IMR-90 (cell line): ENCODE measurements at regions of chr5 and their contacts with region 1.

Region 1: GRCh38 chr5:179795863-179796833 is 2.4 kb downstream of the LTC4S start:
- DNase-seq: peak; percentile 78
- ATAC-seq: peak; percentile 88
- H3K4me3 ChIP-seq: peak overlapping the region; percentile 59
- H3K27ac ChIP-seq: peak overlapping the region; percentile 60
- H3K4me1 ChIP-seq: peaks cover 9% of the 10 kb centered on the region; the same call in 1 of the 2 replicates
- H3K27me3 ChIP-seq: no peaks in the 10 kb centered on the region
- CTCF ChIP-seq: peak; percentile 84
- POLR2A ChIP-seq: 0 out of 2 replicates have a peak, but pooled peaks have one; percentile 27
- RAD21 ChIP-seq: peak; percentile 64

Region 2: DNA sequence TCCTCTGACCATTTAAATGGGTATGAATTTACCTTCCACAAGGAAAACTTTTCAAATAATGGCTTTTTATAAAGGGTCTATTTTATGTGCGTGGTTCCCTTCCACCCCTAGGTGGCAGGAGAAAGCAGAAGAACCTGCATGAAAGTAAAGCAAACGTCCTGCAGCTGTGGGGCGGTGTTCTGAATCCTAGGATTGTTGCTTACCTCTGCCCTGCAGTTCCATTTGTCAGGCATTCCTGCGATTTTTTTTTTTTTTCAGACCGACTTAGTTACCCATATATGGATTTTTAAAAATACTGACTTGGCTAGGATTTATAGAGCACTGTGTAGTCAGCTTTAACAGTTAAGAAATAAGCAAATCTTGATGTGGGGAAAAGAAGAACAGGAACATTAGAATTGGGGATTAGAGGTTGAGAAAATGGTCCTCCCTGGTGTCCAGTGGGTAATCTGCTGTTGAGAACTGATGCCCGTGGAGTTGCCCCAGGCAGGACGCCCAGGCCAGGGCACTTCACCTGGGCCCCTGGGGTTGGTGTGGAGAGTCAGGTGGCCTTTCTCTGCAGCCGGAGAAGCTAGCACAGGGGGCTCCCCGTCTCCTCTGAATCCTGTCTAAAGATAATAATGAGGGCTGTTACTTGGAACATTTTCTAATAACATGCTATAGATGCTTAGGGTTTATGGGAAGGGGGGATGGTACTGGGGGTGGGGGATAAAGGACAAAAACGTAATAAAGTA is 32.8 kb before region 1 on chr5:
- CTCF ChIA-PET with region 1: no interaction called
- POLR2A ChIA-PET with region 1: no interaction called
- dilution Hi-C with region 1: no loop called
- in situ Hi-C with region 1: no loop called
- intact Hi-C with region 1: loop called (anchors 1 kb)
- DNase-seq: peak; percentile 91
- ATAC-seq: peak; percentile 77
- H3K4me3 ChIP-seq: no peak overlapping the region
- H3K27ac ChIP-seq: peak overlapping the region; percentile 90
- H3K4me1 ChIP-seq: peaks cover 39% of the 10 kb centered on the region
- H3K27me3 ChIP-seq: no peaks in the 10 kb centered on the region
- CTCF ChIP-seq: peak; percentile 93
- POLR2A ChIP-seq: no peak
- RAD21 ChIP-seq: peak; percentile 72

Region 3: DNA sequence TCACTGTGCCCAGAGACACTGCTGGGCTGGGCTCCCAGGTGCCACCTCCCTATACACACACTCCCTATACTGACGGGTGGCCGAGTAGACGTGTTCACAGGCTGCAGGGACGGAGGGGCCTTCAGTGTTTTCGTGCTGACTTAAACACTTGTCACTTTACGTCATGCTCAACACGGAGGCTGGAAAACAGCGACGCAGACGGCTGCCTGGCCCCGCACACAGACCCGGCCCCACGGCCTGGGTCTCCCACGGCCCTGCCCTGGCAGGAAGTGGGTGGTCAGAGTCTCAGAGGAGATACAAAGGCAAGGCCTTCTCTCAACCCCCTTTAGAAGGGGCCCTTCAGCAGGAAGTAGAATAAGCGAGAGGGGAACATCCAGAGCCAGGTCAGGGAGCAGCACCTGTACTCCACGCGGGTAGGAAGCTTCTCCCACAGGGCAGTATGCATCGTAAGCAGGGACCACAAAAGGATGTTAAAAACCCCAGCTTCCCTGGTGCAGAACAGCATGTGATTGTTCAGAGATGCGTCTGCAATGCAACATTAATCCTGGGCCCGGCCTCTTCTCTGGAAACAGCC is 123.4 kb after region 1 on chr5:
- CTCF ChIA-PET with region 1: no interaction called
- POLR2A ChIA-PET with region 1: no interaction called
- dilution Hi-C with region 1: no loop called
- in situ Hi-C with region 1: no loop called
- intact Hi-C with region 1: no loop called
- DNase-seq: no peak
- ATAC-seq: no peak
- H3K4me3 ChIP-seq: no peak overlapping the region
- H3K27ac ChIP-seq: no peak overlapping the region
- H3K4me1 ChIP-seq: no peaks in the 10 kb centered on the region
- H3K27me3 ChIP-seq: peaks cover 3% of the 10 kb centered on the region; the same call in 1 of the 2 replicates
- CTCF ChIP-seq: no peak
- POLR2A ChIP-seq: no peak
- RAD21 ChIP-seq: no peak